IMR-90 (cell line): ENCODE measurements at regions of chr17 and their contacts with region 1.

Region 1: DNA sequence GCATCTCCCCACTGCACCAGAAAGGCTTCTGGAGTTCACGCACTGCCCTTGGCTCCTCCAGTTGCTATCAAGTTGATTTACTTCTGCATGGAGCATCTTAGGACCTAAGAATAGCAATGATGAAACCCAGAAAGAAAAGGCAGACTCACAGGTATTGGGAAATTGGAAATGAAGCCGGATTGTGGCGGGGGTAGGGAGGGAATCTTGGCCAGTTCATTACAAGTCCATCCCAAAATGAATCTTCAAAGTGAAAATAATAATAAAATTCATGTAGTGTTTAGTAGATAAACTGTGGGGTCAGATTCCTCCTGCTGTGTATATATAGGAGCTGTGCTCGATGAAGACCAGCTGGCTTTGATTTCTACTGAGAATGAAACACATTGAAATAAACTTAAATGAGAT is 33.7 kb downstream of the TEKT3 start:
- DNase-seq: peak; percentile 89
- ATAC-seq: peak; percentile 79
- H3K4me3 ChIP-seq: no peak overlapping the region
- H3K27ac ChIP-seq: peak overlapping the region; percentile 20; the same call in 1 of the 2 replicates
- H3K4me1 ChIP-seq: peaks cover 20% of the 10 kb centered on the region
- H3K27me3 ChIP-seq: peaks cover 8% of the 10 kb centered on the region
- CTCF ChIP-seq: no peak
- POLR2A ChIP-seq: no peak
- RAD21 ChIP-seq: no peak

Region 2: DNA sequence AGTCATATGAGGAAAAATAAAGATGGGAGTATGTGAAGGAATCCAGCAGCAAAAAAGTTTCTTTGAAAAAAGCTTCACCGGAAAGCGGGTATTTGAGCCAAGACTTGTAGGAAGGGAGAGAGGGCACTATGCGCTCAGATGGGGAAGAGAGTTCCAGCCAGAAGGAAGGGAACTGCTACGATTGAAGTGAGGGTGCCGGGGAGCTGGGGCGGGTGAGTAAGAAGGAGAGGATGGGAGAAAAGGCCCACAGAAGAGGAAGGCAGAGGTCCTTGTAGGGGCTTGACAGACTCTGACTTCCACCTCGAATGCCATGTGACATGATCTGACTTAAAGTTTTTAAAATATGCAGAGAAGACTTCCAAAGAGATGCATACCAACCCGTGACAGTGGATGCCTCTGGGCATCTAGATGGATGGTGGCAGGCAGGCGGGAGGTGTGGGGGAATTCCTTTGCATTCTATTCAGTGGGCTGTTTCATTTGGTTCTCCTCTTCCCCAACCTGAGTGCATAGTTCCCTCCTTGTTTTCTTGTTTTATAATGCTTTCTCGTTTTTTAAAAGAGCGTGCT is 114.8 kb after region 1 on chr17:
- CTCF ChIA-PET with region 1: no interaction called
- POLR2A ChIA-PET with region 1: no interaction called
- dilution Hi-C with region 1: no loop called
- in situ Hi-C with region 1: no loop called
- intact Hi-C with region 1: no loop called
- DNase-seq: no peak
- ATAC-seq: no peak
- H3K4me3 ChIP-seq: no peak overlapping the region
- H3K27ac ChIP-seq: no peak overlapping the region
- H3K4me1 ChIP-seq: peaks cover 5% of the 10 kb centered on the region; the same call in 1 of the 2 replicates
- H3K27me3 ChIP-seq: peaks cover 3% of the 10 kb centered on the region; the same call in 1 of the 2 replicates
- CTCF ChIP-seq: no peak
- POLR2A ChIP-seq: no peak
- RAD21 ChIP-seq: no peak

Region 3: DNA sequence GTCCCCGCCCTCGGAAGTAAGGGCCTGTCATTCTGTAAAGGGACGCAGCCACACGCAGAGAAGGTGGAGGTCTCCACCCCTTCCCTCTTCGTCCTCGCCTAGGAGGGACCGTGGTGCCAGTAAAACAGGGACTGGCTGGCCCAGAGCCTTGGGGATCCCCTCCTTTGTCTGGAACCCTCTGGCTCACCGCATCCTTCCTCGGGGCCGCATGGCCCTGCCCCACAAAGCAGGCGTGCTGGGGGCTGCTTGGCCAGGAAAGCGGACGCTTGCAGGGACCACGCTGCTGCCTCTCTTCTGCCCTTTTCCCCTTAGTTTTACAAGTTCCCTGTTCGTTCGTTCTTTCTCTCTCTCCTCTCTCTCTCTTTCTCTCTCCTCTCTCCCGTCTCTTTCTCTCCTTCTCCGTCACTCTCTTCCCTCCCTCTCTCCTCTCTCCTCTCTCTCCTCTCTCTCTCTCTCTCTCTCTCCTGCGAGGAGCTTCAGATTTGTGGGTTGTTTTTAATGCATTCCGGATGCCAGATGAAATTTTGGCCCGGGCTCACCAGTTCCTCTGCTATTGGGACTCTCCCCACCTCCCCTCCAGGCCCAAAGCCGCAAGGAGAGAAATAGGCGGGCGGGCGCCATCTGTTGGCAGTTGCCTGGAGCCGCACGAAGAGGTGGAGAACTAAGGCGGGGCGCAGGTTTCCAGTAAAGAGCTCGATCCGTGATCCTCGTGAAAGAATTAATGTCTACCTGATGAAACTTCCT is 194.8 kb after region 1 on chr17:
- CTCF ChIA-PET with region 1: no interaction called
- POLR2A ChIA-PET with region 1: no interaction called
- dilution Hi-C with region 1: no loop called
- in situ Hi-C with region 1: no loop called
- intact Hi-C with region 1: loop called (anchors 1 kb)
- DNase-seq: peak; percentile 93
- ATAC-seq: peak; percentile 99
- H3K4me3 ChIP-seq: no peak overlapping the region
- H3K27ac ChIP-seq: peak overlapping the region; percentile 47; the same call in 1 of the 2 replicates
- H3K4me1 ChIP-seq: peaks cover 7% of the 10 kb centered on the region; the same call in 1 of the 2 replicates
- H3K27me3 ChIP-seq: no peaks in the 10 kb centered on the region
- CTCF ChIP-seq: peak; percentile 97
- POLR2A ChIP-seq: peak; percentile 43; the same call in 1 of the 2 replicates
- RAD21 ChIP-seq: peak; percentile 97